MCF 10A (cell line): ENCODE measurements at regions of chr4 and their contacts with region 1.

Region 1: GRCh38 chr4:81465395-81466340 is 6.0 kb downstream of the RASGEF1B start:
- DNase-seq: no peak
- H3K4me3 Mint-ChIP-seq: no peak overlapping the region
- H3K27ac Mint-ChIP-seq: no peak overlapping the region
- H3K4me1 Mint-ChIP-seq: peaks cover 16% of the 10 kb centered on the region
- H3K27me3 Mint-ChIP-seq: no peaks in the 10 kb centered on the region
- CTCF ChIP-seq: no peak

Region 2: DNA sequence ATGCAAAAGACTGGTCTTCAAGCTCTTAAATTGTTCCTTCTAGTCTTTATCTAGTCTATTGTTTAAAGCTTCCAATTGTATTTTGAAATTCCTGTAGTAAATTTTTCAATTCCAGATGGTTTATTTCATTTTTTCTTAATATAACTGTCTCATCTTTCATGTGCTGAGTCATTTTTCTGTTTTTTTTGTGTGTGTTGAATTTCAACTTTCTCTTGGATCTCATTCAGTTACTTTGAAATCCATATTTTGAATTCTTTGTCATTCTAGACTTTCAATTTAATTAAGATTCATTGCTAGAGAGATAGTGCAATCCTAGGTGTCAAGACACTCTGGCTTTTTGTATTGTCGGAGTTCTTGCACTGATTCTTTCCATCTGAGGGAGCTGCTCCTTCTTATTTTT is 122.6 kb before region 1 on chr4:
- CTCF ChIA-PET with region 1: no interaction called
- POLR2A ChIA-PET with region 1: no interaction called
- intact Hi-C with region 1: no loop called
- DNase-seq: no peak
- H3K4me3 Mint-ChIP-seq: no peak overlapping the region
- H3K27ac Mint-ChIP-seq: no peak overlapping the region
- H3K4me1 Mint-ChIP-seq: no peaks in the 10 kb centered on the region
- H3K27me3 Mint-ChIP-seq: no peaks in the 10 kb centered on the region
- CTCF ChIP-seq: no peak

Region 3: DNA sequence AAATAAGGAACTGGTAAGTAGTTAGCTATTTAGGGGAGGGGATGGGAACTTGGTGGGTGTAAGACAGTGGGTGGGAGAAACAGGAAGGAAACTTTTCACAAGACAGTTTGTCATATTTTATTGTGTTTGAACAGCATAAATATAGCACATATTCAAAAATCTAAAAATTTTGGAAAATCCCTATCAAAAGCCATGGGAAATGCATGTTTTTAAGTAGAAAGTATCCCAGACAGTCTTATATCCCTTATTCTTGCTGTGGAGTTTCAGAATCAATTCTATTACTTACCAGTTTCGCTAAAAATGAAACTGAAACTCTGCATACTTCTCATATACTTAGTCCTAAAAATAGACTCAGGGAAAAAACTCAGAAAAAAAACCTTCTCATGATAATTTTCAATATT is 28.4 kb after region 1 on chr4:
- CTCF ChIA-PET with region 1: no interaction called
- POLR2A ChIA-PET with region 1: no interaction called
- intact Hi-C with region 1: no loop called
- DNase-seq: no peak
- H3K4me3 Mint-ChIP-seq: no peak overlapping the region
- H3K27ac Mint-ChIP-seq: no peak overlapping the region
- H3K4me1 Mint-ChIP-seq: no peaks in the 10 kb centered on the region
- H3K27me3 Mint-ChIP-seq: no peaks in the 10 kb centered on the region
- CTCF ChIP-seq: no peak

Region 4: DNA sequence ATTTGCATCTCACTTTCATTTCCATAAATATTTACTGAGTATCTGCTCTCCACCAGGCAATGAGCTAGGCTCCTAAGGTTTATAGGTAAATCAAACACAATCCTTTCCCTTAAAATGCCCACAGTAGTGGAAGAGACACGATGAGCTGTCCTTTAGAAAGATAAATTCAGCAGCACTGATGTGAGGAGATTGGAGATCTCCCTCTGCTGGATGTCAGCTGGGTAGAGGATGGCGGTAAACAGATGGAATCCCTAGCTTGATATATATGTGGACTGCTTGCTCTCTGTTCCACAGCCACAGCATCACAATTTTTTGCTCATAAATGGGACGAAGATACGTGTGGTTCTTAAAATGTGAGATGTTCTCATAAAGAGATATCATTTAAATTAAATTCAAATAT is 222.4 kb after region 1 on chr4:
- CTCF ChIA-PET with region 1: interaction called, 11 read pairs
- POLR2A ChIA-PET with region 1: no interaction called
- intact Hi-C with region 1: loop called (anchors 1 kb)
- DNase-seq: peak; percentile 7
- H3K4me3 Mint-ChIP-seq: no peak overlapping the region
- H3K27ac Mint-ChIP-seq: no peak overlapping the region
- H3K4me1 Mint-ChIP-seq: no peaks in the 10 kb centered on the region
- H3K27me3 Mint-ChIP-seq: no peaks in the 10 kb centered on the region
- CTCF ChIP-seq: no peak